GM18951 (cell line): ENCODE measurements at regions of chr6 and their contacts with region 1.

Region 1: GRCh38 chr6:190596-191395 is 101.5 kb upstream of the DUSP22 start:
- POLR2A ChIP-seq: no peak

Region 2: DNA sequence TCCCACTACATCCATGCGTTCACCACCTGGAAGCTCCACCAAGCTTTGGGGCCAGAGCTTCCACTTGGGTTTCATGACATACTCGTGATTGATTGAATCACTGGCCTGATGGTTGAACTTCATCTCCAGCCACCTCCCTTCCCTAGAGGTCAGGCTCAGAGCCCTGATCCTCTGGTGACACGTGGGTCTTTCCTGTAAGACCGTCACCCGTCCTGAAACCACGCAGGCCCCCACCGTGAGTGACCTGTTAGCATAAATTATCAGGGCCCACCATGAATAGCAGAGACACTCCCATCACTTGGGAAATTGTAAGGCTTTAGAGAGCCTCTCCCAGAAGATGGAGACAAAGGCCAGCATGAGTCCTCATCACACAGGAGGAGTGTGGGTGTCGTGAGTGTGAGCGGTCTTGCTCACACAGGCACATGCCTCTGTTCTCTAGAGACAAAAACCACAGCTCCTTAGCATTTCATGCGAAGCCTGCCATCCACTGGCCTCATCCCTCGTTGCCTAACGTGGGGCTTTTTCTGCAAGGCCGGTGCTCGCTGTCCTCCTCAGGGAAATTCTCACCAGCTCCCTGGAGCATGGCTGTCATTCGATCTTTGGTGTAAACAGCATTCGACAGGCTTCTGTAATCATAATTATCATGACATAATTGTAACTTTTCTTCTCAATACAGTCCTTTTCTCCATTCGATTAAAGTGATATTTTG is 36.4 kb after region 1 on chr6:
- in situ Hi-C with region 1: loop called (anchors 5 kb)
- POLR2A ChIP-seq: no peak

Region 3: GRCh38 chr6:364609-365540 is 174.1 kb after region 1 on chr6:
- in situ Hi-C with region 1: no loop called
- POLR2A ChIP-seq: no peak

Region 4: DNA sequence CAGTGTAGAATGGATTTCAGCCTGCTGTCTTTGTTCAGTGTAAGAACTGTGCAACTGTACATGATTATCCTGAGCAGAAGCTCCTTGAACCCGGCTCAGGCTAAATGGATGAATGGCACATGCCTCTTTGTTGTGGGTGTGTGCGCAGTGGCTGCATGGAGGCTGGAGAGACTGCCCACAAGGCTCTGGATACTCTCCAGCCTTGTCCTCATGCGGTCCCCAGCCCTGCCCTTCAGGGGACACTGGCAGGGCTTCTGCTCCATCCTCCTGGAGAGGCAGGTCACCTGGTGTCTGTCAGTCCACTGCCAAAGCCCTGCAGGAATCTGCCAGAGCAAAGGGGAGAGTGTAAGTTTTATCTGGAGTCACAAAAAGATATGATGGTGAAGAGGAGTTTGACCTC is 743.9 kb after region 1 on chr6:
- in situ Hi-C with region 1: no loop called
- POLR2A ChIP-seq: no peak